ENCODE measurements at regions of chr20 and their contacts with region 1.

Region 1: GRCh38 chr20:10696650-10697049 is 22.9 kb upstream of the JAG1 start:
- DNase-seq: no peak
- ATAC-seq: no peak
- H3K4me3 ChIP-seq: no peak overlapping the region
- H3K27ac ChIP-seq: no peak overlapping the region
- H3K4me1 ChIP-seq: peaks cover 0 to 9% (median 0%) of the 10 kb centered on the region in 12 donors
- H3K27me3 ChIP-seq: no peaks in the 10 kb centered on the region
- CTCF ChIP-seq: peak in 11 of 12 donors; percentile 23 to 58 (median 47)
- POLR2A ChIP-seq: no peak

Region 2: GRCh38 chr20:10992731-10993130 is 296.1 kb after region 1 on chr20:
- intact Hi-C with region 1: loop called in 1 of 10 experiments (anchors 10 kb)
- DNase-seq: no peak
- ATAC-seq: no peak
- H3K4me3 ChIP-seq: no peak overlapping the region
- H3K27ac ChIP-seq: no peak overlapping the region
- H3K4me1 ChIP-seq: peaks cover 0 to 13% (median 0%) of the 10 kb centered on the region in 12 donors
- H3K27me3 ChIP-seq: no peaks in the 10 kb centered on the region
- CTCF ChIP-seq: no peak
- POLR2A ChIP-seq: no peak